Gastrocnemius medialis (tissue), 4 donors: ENCODE measurements at regions of chr11 and their contacts with region 1.

Region 1: DNA sequence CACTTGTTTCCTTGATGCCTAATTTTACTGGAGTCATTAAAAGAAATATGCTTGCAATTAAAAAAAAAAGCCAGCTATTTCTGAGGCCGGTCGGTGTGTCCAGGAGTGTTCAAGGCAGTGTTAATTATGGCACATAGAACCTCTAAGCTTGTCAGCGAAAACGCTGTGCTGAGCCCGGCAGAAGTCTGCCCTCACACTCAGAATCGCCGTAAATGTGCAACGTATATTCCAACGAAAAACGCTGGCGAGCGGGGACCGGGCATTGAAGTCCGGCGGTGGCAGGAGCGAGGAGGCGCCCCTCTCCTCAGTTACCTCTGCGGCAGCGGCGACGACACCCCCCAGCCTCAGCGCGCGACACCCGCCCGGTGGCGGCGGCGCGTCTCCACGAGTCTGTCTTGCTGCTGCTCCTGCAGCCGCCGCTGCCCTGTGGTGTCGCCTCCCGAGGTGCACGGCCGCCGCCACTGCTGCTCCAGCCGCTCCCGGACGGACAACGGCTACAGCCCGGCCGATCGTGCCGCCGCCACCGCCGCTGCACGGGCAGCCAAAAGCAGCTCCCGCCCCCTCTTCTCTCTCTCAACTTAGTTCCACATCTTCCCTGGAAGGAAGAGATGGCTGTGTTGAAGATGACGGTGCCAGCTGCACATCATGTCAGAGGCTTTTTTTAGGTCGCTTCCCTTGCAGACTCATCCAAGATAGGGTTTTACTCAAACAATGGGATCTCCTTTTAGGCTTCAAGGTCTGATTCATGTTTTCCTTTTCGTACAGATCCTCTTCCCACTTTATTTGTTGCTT is 56.0 kb downstream of the JAM3 start:
- DNase-seq: peak in 1 of 2 donors; percentile 36
- ATAC-seq: peak; percentile 50 to 72
- H3K4me3 ChIP-seq: peak overlapping the region; percentile 52 to 59 (median 54)
- H3K27ac ChIP-seq: peak overlapping the region; percentile 52 to 70 (median 60)
- H3K4me1 ChIP-seq: peaks cover 32 to 43% of the 10 kb centered on the region in 2 donors
- H3K27me3 ChIP-seq: peaks cover 0 to 3% (median 0%) of the 10 kb centered on the region in 3 donors
- CTCF ChIP-seq: peak in 2 of 5 experiments; percentile 15 to 16
- POLR2A ChIP-seq: peak; percentile 20 to 21

Region 2: GRCh38 chr11:133956650-133957633 is 167.9 kb before region 1 on chr11 and contains the start of gene IGSF9B:
- in situ Hi-C with region 1: no loop called
- intact Hi-C with region 1: loop called (anchors 10 kb)
- DNase-seq: peak; percentile 69 to 80
- ATAC-seq: peak; percentile 83 to 89
- H3K4me3 ChIP-seq: peak within 1 kb of the TSS; percentile 57 to 67 (median 60)
- H3K27ac ChIP-seq: peak within 1 kb of the TSS in 1 of 4 donors; percentile 39
- H3K4me1 ChIP-seq: peaks cover 15 to 19% of the 10 kb centered on the region in 2 donors
- H3K27me3 ChIP-seq: peaks cover 11 to 21% (median 11%) of the 10 kb centered on the region in 3 donors
- CTCF ChIP-seq: no peak
- POLR2A ChIP-seq: peak; percentile 47 to 74
- total RNA-seq, gene IGSF9B: 0.07 to 2.5 (median 1.4) TPM

Region 3: GRCh38 chr11:134068829-134069425 is 55.9 kb before region 1 on chr11 and contains the start of gene JAM3:
- in situ Hi-C with region 1: no loop called
- intact Hi-C with region 1: loop called (anchors 2 kb)
- DNase-seq: peak; percentile 60 to 79
- ATAC-seq: peak; percentile 73 to 84
- H3K4me3 ChIP-seq: peak within 1 kb of the TSS; percentile 54 to 74 (median 64)
- H3K27ac ChIP-seq: peak within 1 kb of the TSS; percentile 57 to 78 (median 67)
- H3K4me1 ChIP-seq: peaks cover 0 to 9% of the 10 kb centered on the region in 2 donors
- H3K27me3 ChIP-seq: peaks cover 19 to 24% (median 22%) of the 10 kb centered on the region in 3 donors
- CTCF ChIP-seq: no peak
- POLR2A ChIP-seq: peak; percentile 46 to 73
- total RNA-seq, gene JAM3: 3.5 to 9.7 (median 6.2) TPM

Region 4: GRCh38 chr11:135027461-135027860 is 902.6 kb after region 1 on chr11:
- in situ Hi-C with region 1: no loop called
- intact Hi-C with region 1: no loop called
- DNase-seq: no peak
- ATAC-seq: no peak
- H3K4me3 ChIP-seq: no peak overlapping the region
- H3K27ac ChIP-seq: no peak overlapping the region
- H3K4me1 ChIP-seq: no peaks in the 10 kb centered on the region
- H3K27me3 ChIP-seq: no peaks in the 10 kb centered on the region
- CTCF ChIP-seq: no peak
- POLR2A ChIP-seq: no peak